Body of pancreas (tissue), 4 donors: ENCODE measurements at regions of chr4 and their contacts with region 1.

Region 1: GRCh38 chr4:77959566-77960338 is 97.1 kb downstream of the MRPL1 start:
- DNase-seq: peak in 1 of 4 donors; percentile 28
- ATAC-seq: peak; percentile 65
- H3K4me3 ChIP-seq: no peak overlapping the region
- H3K27ac ChIP-seq: no peak overlapping the region
- H3K4me1 ChIP-seq: no peaks in the 10 kb centered on the region
- H3K27me3 ChIP-seq: no peaks in the 10 kb centered on the region
- CTCF ChIP-seq: peak; percentile 40 to 73 (median 66)
- POLR2A ChIP-seq: no peak

Region 2: DNA sequence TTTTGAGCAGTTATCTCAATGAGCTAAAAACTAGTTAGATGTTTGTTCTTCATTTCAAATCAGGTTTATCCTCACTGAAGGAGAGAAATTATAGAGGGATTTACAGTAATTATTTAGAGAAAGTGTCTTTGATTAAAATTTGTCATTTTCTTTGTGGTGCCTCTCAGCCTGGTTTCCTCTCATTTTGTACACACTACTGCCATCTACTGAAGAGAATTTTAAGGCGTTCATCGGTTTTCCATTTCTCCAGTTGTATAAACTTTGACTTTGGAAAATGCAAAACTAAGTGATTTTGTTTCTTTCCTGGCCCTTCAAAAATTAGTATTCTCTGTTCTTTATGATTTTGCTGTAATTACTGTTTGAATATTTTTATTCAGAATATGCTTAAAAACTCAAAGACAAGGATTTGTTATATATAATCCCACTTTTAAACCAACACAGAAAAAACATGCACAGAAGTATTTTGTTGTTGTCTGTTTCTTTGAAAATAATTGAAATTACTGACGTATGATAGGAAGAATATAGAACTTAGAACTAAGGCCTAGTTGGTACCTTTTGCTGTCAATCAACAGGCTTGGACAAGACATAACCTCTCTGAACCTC is 557.4 kb after region 1 on chr4:
- intact Hi-C with region 1: loop called (anchors 10 kb)
- DNase-seq: peak in 1 of 4 donors; percentile 14
- ATAC-seq: peak; percentile 56
- H3K4me3 ChIP-seq: no peak overlapping the region
- H3K27ac ChIP-seq: no peak overlapping the region
- H3K4me1 ChIP-seq: peaks cover 6% of the 10 kb centered on the region
- H3K27me3 ChIP-seq: no peaks in the 10 kb centered on the region
- CTCF ChIP-seq: peak in 6 of 7 experiments; percentile 48 to 74 (median 70)
- POLR2A ChIP-seq: no peak